ENCODE measurements at regions of chr1 and their contacts with region 1.

Region 1: DNA sequence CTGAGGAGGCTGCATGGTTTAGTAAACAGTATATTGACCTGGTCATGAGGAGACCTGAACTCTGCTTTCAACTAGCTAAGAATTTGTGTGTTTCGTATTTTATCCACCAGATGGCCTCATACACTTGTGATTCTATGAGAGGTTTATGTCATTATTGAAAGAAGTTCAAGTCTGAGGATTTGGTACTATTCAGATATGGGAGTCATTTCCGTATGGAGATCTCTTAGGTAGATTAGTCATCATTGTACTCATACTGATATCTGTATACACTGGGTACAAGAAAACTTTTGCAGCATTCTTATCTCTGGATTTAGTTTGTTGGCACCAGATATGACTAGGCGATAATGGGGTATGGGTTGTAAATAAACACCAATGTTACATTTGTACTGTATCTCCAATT is 26.6 kb downstream of the ATF6 start:
- DNase-seq: no peak
- H3K4me3 ChIP-seq: no peak overlapping the region
- H3K27ac ChIP-seq: no peak overlapping the region
- H3K4me1 ChIP-seq: no peaks in the 10 kb centered on the region
- H3K27me3 ChIP-seq: peaks cover 0 to 1% (median 0%) of the 10 kb centered on the region in 4 experiments; a peak in 1 of 7 replicates
- CTCF ChIP-seq: peak in 2 of 3 experiments; percentile 44 to 58; a peak in 2 of 4 replicates
- EP300 ChIP-seq: no peak
- POLR2A ChIP-seq: no peak
- RAD21 ChIP-seq: peak; percentile 79 to 82

Region 2: DNA sequence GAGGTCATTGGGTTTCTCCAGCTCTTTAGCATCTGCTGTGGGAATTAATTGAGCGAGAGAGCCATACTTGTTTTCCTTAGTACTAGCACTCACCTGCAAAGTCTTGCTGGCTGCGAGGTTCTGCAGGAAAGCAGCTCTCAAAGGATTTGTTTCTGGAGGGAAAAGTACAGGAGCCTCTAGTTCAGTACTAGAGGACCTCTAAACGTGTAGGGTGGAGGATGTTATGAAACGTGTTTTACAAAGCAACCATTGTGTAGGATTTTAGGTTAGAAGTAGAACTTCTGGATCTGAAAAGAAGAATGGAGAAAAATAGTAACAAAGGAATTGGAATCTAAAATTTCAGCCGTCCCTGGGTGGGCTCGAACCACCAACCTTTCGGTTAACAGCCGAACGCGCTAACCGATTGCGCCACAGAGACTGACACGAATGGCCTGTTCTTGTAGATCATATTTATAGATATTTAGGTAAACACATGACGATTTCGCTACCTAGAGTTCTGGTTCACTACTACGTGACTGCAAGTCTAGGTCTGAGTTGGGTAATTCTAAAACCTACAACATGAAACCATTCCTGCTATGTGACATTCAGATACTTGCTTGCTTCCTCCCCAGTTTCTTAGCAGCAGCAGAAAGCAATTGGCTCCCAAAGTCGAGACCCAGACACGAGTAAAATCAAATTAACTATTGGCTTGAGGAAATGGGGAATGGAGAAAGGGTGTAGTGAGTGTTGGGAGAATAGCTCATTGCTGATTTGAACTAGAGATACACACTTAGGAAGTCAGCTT is 364.8 kb before region 1 on chr1:
- CTCF ChIA-PET with region 1: no interaction called
- POLR2A ChIA-PET with region 1: no interaction called
- DNase-seq: peak in 1 of 2 experiments; percentile 87
- H3K4me3 ChIP-seq: peak overlapping the region; percentile 53 to 75 (median 62)
- H3K27ac ChIP-seq: no peak overlapping the region
- H3K4me1 ChIP-seq: no peaks in the 10 kb centered on the region
- H3K27me3 ChIP-seq: peaks cover 0 to 1% (median 0%) of the 10 kb centered on the region in 4 experiments; a peak in 3 of 7 replicates
- CTCF ChIP-seq: no peak
- EP300 ChIP-seq: peak in 1 of 2 experiments; percentile 21; a peak in 1 of 3 replicates
- POLR2A ChIP-seq: no peak
- RAD21 ChIP-seq: no peak

Region 3: GRCh38 chr1:161905269-161905884 is 112.6 kb after region 1 on chr1:
- CTCF ChIA-PET with region 1: interaction called, 12 read pairs
- POLR2A ChIA-PET with region 1: no interaction called
- DNase-seq: no peak
- H3K4me3 ChIP-seq: no peak overlapping the region
- H3K27ac ChIP-seq: no peak overlapping the region
- H3K4me1 ChIP-seq: no peaks in the 10 kb centered on the region
- H3K27me3 ChIP-seq: no peaks in the 10 kb centered on the region
- CTCF ChIP-seq: peak in 2 of 3 experiments; percentile 55 to 58; a peak in 3 of 4 replicates
- EP300 ChIP-seq: no peak
- POLR2A ChIP-seq: no peak
- RAD21 ChIP-seq: peak; percentile 41 to 55

Region 4: GRCh38 chr1:162023547-162024501 is 231.1 kb after region 1 on chr1 and contains the start of gene OLFML2B:
- CTCF ChIA-PET with region 1: interaction called, 12 read pairs
- POLR2A ChIA-PET with region 1: no interaction called
- DNase-seq: peak; percentile 13 to 88
- H3K4me3 ChIP-seq: peak within 1 kb of the TSS; percentile 59 to 81 (median 68)
- H3K27ac ChIP-seq: no peak within 1 kb of the TSS
- H3K4me1 ChIP-seq: peaks cover 4 to 11% (median 8%) of the 10 kb centered on the region in 4 experiments
- H3K27me3 ChIP-seq: peaks cover 1 to 30% (median 23%) of the 10 kb centered on the region in 4 experiments
- CTCF ChIP-seq: 0 out of 4 replicates have a peak, but pooled peaks of 1 of the 3 experiments have one; percentile 5
- EP300 ChIP-seq: no peak
- POLR2A ChIP-seq: peak in 1 of 2 experiments; percentile 59; a peak in 2 of 3 replicates
- RAD21 ChIP-seq: peak; percentile 25 to 39; a peak in 3 of 4 replicates
- total RNA-seq, gene OLFML2B: 8.4 and 10.4 TPM in 2 replicates

Region 5: GRCh38 chr1:162040681-162041080 is 247.9 kb after region 1 on chr1:
- CTCF ChIA-PET with region 1: interaction called, 180 read pairs
- POLR2A ChIA-PET with region 1: interaction called, 7 read pairs
- DNase-seq: no peak
- H3K4me3 ChIP-seq: no peak overlapping the region
- H3K27ac ChIP-seq: no peak overlapping the region
- H3K4me1 ChIP-seq: no peaks in the 10 kb centered on the region; a peak in 1 of 7 replicates
- H3K27me3 ChIP-seq: no peaks in the 10 kb centered on the region
- CTCF ChIP-seq: peak in 2 of 3 experiments; percentile 55 to 74; a peak in 3 of 4 replicates
- EP300 ChIP-seq: no peak
- POLR2A ChIP-seq: no peak
- RAD21 ChIP-seq: peak; percentile 44 to 45; a peak in 3 of 4 replicates

Measured in H1 (cell line).